ENCODE measurements at regions of chr18 and their contacts with region 1.

Region 1: DNA sequence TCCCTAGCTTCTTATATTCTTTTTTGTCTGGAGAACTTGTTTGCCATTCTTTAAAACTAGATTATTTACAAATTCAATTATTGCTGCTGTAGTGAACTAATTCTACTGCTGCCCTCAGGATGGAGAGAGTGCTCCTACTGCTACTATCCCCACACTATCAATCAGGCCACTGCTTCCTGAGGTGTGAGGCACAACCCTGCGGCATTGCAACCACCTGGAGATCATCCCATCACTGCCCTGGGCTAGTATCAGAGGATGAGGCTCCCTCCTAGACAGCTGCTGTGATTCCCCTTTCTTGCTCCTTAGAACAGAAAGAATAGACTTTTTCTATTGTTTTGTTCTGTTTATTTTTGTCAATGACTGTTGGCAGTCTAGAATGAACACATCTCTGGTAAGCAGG is 146.6 kb downstream of the CDH19 start:
- DNase-seq: no peak
- ATAC-seq: no peak

Region 2: DNA sequence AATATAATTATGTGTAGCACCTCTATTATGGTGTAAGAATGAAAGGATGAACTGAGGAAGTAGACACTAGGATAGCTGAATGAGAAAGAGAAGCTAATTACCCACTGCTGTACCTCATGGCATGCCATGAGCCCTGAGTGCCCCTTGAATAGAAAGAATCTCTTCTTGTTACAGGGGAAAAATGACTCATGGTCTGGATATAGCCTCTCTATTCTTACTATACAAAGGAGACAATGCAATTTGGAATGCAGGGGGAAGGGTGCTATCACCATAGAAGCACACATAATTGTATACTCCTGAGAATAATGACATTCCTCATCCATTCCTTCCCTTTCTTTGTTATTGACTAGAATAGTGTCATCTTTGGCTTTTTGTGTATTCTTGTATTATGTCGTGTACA is 321.2 kb before region 1 on chr18:
- intact Hi-C with region 1: no loop called
- DNase-seq: no peak
- ATAC-seq: no peak

Region 3: DNA sequence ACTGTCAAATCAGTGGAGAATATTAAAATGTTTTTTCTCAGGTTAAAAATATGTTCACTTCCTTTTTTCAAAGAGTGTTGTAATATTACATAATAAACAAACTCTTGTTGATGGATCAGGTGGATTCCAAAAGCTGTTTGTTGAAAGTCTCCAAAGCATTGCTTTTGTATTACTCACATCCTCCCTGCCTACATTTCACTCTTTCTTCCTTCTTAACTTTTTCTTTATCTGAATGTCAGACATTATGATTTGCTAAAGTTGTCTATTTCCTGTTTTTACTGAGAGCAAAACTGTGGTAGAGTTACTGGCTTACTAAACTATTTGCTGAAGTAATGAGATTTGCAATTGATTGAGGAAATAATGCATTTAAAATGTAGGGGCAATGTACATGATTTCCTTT is 54.6 kb after region 1 on chr18:
- intact Hi-C with region 1: loop called in 1 of 2 experiments (anchors 10 kb)
- DNase-seq: no peak
- ATAC-seq: no peak

Region 4: GRCh38 chr18:66792466-66792865 is 335.2 kb after region 1 on chr18:
- intact Hi-C with region 1: no loop called
- DNase-seq: no peak
- ATAC-seq: no peak